PC-3 (cell line): ENCODE measurements at regions of chr14 and their contacts with region 1.

Region 1: GRCh38 chr14:49862089-49862673 is 9.6 kb upstream of the NEMF start:
- DNase-seq: peak; percentile 88
- ATAC-seq: peak; percentile 21
- H3K4me3 ChIP-seq: peak overlapping the region; percentile 73
- H3K27ac ChIP-seq: peak overlapping the region; percentile 66
- H3K4me1 ChIP-seq: peaks cover 20% of the 10 kb centered on the region
- H3K27me3 ChIP-seq: no peaks in the 10 kb centered on the region
- CTCF ChIP-seq: peak; percentile 100

Region 2: DNA sequence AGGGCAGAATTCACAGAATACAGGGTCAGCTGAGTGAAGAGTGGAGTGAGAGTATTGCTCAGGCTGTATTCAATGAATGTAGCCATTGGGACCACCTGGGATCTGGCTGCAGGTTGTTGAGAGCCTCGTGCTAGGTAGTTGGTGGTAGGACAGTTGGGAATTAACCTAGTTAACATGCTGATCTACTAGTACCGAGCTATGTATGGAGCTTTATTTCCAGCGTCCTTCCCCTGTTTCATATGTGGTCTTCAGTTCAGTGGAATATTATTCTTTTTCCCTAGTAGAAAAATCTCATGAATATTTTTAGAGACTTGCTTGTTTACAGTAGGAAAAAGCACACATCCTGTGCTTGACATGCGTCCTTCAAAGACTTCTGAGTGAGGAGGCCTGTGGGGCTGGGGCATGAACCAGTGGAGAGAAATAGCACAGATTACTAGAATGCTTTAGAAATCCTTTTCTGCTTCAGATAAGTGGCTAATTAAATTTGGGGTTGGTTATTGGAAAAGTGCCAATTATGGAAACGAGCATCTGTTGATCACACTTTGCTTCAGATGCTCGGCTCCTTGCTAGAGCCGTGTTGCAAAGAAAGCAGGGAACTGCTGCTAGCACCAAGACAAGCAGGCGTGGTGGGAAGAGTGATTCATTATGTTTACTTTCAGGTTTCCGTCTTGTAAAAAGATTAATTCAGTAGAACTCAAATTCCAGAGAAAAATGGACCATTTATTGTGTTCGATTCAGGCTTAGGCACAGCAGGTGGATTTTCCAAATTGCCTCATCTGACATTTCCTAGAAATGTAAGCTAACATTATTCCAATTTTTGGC is 84.3 kb after region 1 on chr14:
- CTCF ChIA-PET with region 1: interaction called, 3 read pairs
- POLR2A ChIA-PET with region 1: no interaction called
- intact Hi-C with region 1: loop called (anchors 2 kb)
- DNase-seq: peak; percentile 93
- ATAC-seq: peak; percentile 82
- H3K4me3 ChIP-seq: peak overlapping the region; percentile 23; the same call in 1 of the 2 replicates
- H3K27ac ChIP-seq: peak overlapping the region; percentile 65
- H3K4me1 ChIP-seq: peaks cover 50% of the 10 kb centered on the region
- H3K27me3 ChIP-seq: no peaks in the 10 kb centered on the region
- CTCF ChIP-seq: no peak

Region 3: DNA sequence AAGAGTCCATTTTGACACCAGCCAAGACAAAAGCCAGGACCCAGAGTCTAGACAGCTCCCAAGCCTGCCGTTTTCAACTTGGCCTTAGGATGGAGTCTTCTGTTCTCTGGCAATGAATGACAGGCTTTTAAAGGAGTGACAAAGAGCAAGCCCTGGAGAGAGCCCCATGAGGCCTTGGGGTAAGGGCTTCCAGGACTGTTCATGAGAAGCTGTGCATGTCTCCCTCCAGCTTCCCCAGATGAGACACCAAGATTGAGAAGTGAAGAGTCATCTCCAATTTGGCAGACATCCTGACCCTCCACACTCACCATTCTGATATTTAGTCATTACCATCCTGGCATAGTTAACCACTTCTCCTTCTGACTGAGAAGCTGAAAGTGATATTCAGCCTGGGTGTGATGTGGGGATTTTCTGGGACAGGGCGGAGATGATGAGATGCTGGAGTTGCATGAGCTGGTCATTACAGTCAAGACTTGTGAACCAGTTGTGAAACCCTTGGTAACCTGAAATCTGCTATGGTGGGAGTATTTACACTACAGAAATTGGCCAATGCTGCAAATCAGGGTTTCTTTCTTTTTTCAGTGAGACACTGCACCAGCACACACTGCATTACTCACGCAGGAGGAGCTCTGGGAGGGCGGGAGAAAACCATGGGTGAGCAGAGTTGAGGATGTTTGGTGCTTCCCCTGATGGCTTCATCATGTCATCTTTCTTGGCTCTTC is 176.4 kb after region 1 on chr14:
- CTCF ChIA-PET with region 1: interaction called, 12 read pairs
- POLR2A ChIA-PET with region 1: no interaction called
- intact Hi-C with region 1: no loop called
- DNase-seq: peak; percentile 98
- ATAC-seq: peak; percentile 71
- H3K4me3 ChIP-seq: no peak overlapping the region
- H3K27ac ChIP-seq: peak overlapping the region; percentile 90
- H3K4me1 ChIP-seq: peaks cover 44% of the 10 kb centered on the region
- H3K27me3 ChIP-seq: no peaks in the 10 kb centered on the region
- CTCF ChIP-seq: 0 out of 2 replicates have a peak, but pooled peaks have one; percentile 30

Region 4: DNA sequence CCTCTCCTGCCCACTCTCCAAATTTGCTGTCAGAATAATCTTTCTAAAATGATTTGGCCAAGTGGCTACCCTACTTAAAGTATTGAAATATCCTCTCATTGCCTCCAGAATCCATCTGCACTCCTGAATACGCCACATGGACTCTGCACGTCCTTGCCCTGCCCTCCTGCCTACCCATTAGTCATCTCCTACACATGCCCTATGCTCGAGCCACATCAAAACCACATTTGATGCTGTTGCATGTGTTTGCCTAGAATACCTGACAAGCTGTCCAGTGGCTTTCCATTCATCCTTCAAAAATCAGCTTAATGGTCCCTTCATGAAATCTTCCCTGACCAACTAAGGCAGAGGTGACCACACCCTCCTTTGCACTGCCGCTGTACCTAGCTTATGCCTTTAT is 237.2 kb after region 1 on chr14:
- CTCF ChIA-PET with region 1: interaction called, 12 read pairs
- POLR2A ChIA-PET with region 1: interaction called, 10 read pairs
- intact Hi-C with region 1: no loop called
- DNase-seq: peak; percentile 93
- ATAC-seq: peak; percentile 99
- H3K4me3 ChIP-seq: no peak overlapping the region
- H3K27ac ChIP-seq: peak overlapping the region; percentile 66
- H3K4me1 ChIP-seq: peaks cover 38% of the 10 kb centered on the region
- H3K27me3 ChIP-seq: no peaks in the 10 kb centered on the region
- CTCF ChIP-seq: no peak

Region 5: DNA sequence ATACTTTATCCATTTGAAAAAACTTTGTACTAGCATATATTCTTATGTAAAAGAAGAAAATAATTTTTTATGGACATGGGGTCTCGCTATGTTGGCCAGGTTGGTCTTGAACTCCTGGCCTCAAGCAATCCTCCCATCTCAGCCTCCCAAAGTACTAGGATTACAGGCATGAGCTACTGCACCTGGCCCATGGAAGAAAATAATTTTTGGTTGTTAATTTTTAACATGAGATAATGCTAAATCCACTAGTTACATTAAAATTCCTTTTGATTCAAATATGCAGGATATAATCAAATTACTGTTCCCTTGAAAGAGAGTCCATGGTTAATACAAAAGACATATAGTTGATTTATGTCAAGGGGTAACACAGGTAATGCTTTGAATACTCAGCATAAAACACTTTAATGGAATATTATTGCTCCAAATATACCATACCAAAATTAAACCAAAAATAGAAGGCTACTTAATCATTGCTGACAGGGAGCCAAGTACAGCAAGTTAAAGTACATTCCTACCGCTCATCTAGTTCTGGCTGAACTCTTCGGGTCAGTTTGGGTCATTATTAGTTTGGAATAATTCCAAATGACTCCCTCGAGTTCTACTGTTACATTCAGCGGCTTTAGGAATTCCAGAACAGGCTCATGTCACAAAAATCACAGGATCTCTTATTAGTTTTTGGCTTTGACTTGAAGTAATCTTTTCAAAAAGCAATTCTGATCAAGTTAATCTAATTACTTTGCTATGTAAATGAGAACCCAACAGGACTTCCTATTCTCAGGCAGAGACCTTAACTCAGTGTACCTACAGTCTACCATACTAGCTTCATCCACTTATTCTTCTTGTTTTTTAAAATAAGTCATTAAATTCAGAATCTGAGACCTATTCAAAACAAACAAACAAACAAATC is 363.1 kb after region 1 on chr14:
- CTCF ChIA-PET with region 1: interaction called, 13 read pairs
- POLR2A ChIA-PET with region 1: no interaction called
- intact Hi-C with region 1: loop called (anchors 2 kb)
- DNase-seq: peak; percentile 87
- ATAC-seq: peak; percentile 83
- H3K4me3 ChIP-seq: no peak overlapping the region
- H3K27ac ChIP-seq: no peak overlapping the region
- H3K4me1 ChIP-seq: peaks cover 21% of the 10 kb centered on the region
- H3K27me3 ChIP-seq: no peaks in the 10 kb centered on the region
- CTCF ChIP-seq: no peak

Region 6: GRCh38 chr14:50311975-50312733 is 450.0 kb after region 1 on chr14 and contains the starts of genes DMAC2L and L2HGDH:
- CTCF ChIA-PET with region 1: no interaction called
- POLR2A ChIA-PET with region 1: no interaction called
- intact Hi-C with region 1: loop called (anchors 5 kb)
- DNase-seq: peak; percentile 98
- ATAC-seq: peak; percentile 91
- H3K4me3 ChIP-seq: peak within 1 kb of the TSS; percentile 93
- H3K27ac ChIP-seq: peak within 1 kb of the TSS; percentile 77
- H3K4me1 ChIP-seq: peaks cover 18% of the 10 kb centered on the region
- H3K27me3 ChIP-seq: no peaks in the 10 kb centered on the region
- CTCF ChIP-seq: peak; percentile 20
- total RNA-seq, gene DMAC2L: 2.3 and 18.1 TPM in 2 replicates
- total RNA-seq, gene L2HGDH: 27.8 and 41.6 TPM in 2 replicates